Naive thymus-derived CD8-positive, alpha-beta T cell (primary cell): ENCODE measurements at regions of chr2 and their contacts with region 1.

Region 1: GRCh38 chr2:105929516-105929915 is 184.8 kb downstream of the NCK2 start:
- DNase-seq: peak in 9 of 10 donors; percentile 9 to 77 (median 54)
- ATAC-seq: peak; percentile 75 to 82
- H3K4me3 Mint-ChIP-seq: peak overlapping the region in 9 of 10 donors; percentile 36 to 82 (median 68)
- H3K27ac Mint-ChIP-seq: peak overlapping the region in 9 of 10 donors; percentile 80 to 96 (median 93)
- H3K4me1 Mint-ChIP-seq: peaks cover 41 to 71% (median 62%) of the 10 kb centered on the region in 4 donors
- H3K27me3 Mint-ChIP-seq: no peaks in the 10 kb centered on the region

Region 2: GRCh38 chr2:105903051-105903674 is 26.4 kb before region 1 on chr2:
- POLR2A ChIA-PET with region 1: interaction called, 14 read pairs
- DNase-seq: no peak
- ATAC-seq: no peak
- H3K4me3 Mint-ChIP-seq: peak overlapping the region in 1 of 10 donors; percentile 54
- H3K27ac Mint-ChIP-seq: peak overlapping the region in 6 of 10 donors; percentile 0 to 86 (median 71)
- H3K4me1 Mint-ChIP-seq: peaks cover 41 to 78% (median 71%) of the 10 kb centered on the region in 4 donors
- H3K27me3 Mint-ChIP-seq: no peaks in the 10 kb centered on the region

Region 3: DNA sequence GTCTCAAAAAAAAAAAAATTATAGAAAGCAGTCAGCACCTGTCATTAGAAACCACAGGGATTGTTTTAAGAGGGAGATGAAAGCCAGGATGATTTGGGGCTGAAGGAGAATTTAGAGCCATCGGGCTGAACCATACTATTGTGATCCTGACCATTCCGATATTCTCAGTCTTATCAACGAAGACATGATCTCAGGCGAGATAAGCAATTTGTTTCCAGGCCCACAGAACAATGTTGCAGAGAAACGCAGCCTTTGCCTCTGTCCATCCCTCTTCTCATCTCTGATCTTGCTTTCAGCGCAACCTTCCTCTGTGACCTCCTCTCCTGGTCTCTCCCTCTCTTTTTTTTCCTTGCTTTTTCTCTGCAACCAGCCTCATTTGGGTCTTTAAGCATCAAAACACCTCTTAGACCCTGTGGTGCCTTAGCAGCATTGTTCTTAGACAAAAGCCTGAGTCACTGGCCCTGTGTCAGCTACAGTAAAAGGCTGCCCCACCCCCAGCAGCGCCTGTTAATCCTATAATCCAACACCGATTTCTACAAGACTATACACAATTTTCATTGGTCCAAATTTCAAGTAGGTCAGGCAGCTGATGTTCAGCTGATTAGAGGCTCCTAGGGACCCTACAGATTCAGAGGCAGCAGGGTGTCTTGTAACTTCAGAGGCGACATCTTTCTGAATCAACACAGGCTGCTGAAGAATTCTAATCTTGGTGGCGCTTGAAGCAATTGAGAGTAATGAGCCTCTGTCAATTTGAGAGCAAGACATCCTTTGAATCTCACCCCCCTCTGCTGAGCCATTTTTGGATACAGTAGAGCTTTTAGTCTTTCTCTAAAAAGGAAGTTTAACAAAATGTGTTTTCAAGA is 21.2 kb after region 1 on chr2:
- POLR2A ChIA-PET with region 1: interaction called, 11 read pairs
- DNase-seq: no peak
- ATAC-seq: peak in 1 of 2 donors; percentile 17
- H3K4me3 Mint-ChIP-seq: peak overlapping the region in 8 of 10 donors; percentile 2 to 77 (median 44)
- H3K27ac Mint-ChIP-seq: peak overlapping the region in 6 of 10 donors; percentile 28 to 86 (median 66)
- H3K4me1 Mint-ChIP-seq: peaks cover 43 to 71% (median 65%) of the 10 kb centered on the region in 4 donors
- H3K27me3 Mint-ChIP-seq: no peaks in the 10 kb centered on the region

Region 4: GRCh38 chr2:106124905-106125405 is 195.4 kb after region 1 on chr2:
- POLR2A ChIA-PET with region 1: no interaction called
- DNase-seq: no peak
- ATAC-seq: no peak
- H3K4me3 Mint-ChIP-seq: no peak overlapping the region
- H3K27ac Mint-ChIP-seq: peak overlapping the region in 9 of 10 donors; percentile 8 to 87 (median 48)
- H3K4me1 Mint-ChIP-seq: peaks cover 11 to 40% (median 25%) of the 10 kb centered on the region in 4 donors
- H3K27me3 Mint-ChIP-seq: no peaks in the 10 kb centered on the region

Region 5: GRCh38 chr2:106183101-106183696 is 253.7 kb after region 1 on chr2:
- POLR2A ChIA-PET with region 1: no interaction called
- DNase-seq: no peak
- ATAC-seq: peak in 1 of 2 donors; percentile 18
- H3K4me3 Mint-ChIP-seq: peak overlapping the region in 8 of 10 donors; percentile 31 to 74 (median 70)
- H3K27ac Mint-ChIP-seq: peak overlapping the region; percentile 40 to 83 (median 68)
- H3K4me1 Mint-ChIP-seq: peaks cover 47 to 89% (median 85%) of the 10 kb centered on the region in 4 donors
- H3K27me3 Mint-ChIP-seq: no peaks in the 10 kb centered on the region